Endothelial cell of umbilical vein (primary cell): ENCODE measurements at regions of chr19 and their contacts with region 1.

Region 1: DNA sequence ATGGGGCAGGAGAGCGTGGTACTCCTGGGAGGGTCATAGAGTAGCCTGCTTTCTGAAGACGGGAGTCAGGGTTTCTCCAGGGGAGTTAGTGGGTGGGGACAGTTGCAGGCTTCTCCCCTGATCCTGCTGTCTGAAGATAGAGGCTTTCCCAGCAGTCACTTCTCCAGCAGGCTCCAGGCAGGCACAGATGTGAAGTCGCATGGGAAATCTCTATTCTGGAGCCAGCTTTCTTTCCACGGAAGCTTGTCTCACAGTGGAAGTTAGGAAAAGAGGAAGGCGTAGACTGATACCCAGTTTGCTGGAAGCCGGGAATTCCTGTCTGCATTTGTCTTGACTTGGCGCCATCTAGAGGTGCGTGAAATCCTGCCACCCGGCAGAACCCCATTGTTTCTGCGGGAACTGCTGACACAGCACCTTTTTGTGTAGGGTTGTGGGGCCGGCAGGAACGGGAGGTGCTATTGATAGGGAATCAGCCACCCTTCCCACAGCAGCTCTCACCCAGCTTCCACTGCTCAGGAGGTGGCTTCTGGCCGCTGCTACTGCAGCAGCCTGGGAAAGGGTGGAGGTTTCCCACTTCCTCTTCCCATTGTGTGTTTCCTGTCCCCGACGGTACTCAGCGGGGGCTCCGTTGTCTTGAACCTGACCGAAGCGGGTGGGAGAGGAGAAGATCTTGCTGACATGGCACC is 28.5 kb upstream of the NPAS1 start:
- DNase-seq: peak; percentile 83
- H3K4me3 ChIP-seq: no peak overlapping the region
- H3K27ac ChIP-seq: no peak overlapping the region
- H3K4me1 ChIP-seq: peaks cover 11% of the 10 kb centered on the region
- H3K27me3 ChIP-seq: no peaks in the 10 kb centered on the region
- CTCF ChIP-seq: peak; percentile 87 to 95
- POLR2A ChIP-seq: no peak

Region 2: DNA sequence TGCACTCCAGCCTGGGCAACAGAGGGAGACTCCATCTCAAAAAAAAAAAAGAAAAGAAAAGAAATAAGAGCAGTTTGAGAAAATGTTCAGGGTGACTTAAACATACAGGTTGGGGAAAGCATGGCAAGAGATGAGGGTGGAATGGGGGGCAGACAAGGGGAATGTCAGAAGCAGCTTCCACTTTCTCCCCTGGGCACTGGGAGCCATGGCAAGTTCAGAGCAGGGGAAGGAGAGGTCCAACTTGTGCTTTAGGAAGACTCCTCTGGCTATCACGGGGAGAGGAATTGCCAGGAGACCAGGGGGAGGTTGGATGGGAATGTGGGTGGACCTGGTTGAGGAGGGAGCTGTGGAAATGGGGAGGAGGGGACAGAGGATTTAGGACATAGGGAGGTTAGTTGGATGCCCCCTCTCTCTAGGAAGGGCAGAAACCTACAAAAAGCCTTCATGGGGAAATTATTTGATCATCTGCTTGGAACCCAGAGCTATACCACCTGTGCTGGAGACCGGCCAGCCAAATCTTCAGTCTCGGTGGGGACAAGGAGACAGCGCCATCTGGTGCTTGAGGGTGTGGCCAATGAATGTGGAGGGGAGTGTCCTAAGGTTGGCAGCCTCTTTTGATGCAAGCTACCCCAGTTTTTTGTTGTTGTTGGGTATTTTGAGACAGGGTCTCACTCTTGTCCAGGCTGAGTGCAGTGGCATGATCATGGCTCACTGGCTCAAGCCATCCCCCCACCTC is 237.5 kb before region 1 on chr19:
- CTCF ChIA-PET with region 1: interaction called, 7 read pairs
- POLR2A ChIA-PET with region 1: interaction called, 3 read pairs
- dilution Hi-C with region 1: no loop called
- intact Hi-C with region 1: loop called (anchors 1 kb)
- DNase-seq: peak; percentile 41
- H3K4me3 ChIP-seq: no peak overlapping the region
- H3K27ac ChIP-seq: no peak overlapping the region
- H3K4me1 ChIP-seq: peaks cover 27% of the 10 kb centered on the region
- H3K27me3 ChIP-seq: no peaks in the 10 kb centered on the region
- CTCF ChIP-seq: peak; percentile 47 to 53
- POLR2A ChIP-seq: no peak

Region 3: GRCh38 chr19:46850228-46851203 is 140.6 kb before region 1 on chr19 and contains the start of gene AP2S1:
- CTCF ChIA-PET with region 1: interaction called, 126 read pairs
- POLR2A ChIA-PET with region 1: no interaction called
- dilution Hi-C with region 1: no loop called
- intact Hi-C with region 1: no loop called
- DNase-seq: peak; percentile 99
- H3K4me3 ChIP-seq: peak within 1 kb of the TSS; percentile 71 to 97 (median 89)
- H3K27ac ChIP-seq: peak within 1 kb of the TSS; percentile 73
- H3K4me1 ChIP-seq: peaks cover 10% of the 10 kb centered on the region
- H3K27me3 ChIP-seq: no peaks in the 10 kb centered on the region
- CTCF ChIP-seq: no peak
- POLR2A ChIP-seq: peak; percentile 70
- total RNA-seq, gene AP2S1: 279 and 313 TPM in 2 replicates

Region 4: DNA sequence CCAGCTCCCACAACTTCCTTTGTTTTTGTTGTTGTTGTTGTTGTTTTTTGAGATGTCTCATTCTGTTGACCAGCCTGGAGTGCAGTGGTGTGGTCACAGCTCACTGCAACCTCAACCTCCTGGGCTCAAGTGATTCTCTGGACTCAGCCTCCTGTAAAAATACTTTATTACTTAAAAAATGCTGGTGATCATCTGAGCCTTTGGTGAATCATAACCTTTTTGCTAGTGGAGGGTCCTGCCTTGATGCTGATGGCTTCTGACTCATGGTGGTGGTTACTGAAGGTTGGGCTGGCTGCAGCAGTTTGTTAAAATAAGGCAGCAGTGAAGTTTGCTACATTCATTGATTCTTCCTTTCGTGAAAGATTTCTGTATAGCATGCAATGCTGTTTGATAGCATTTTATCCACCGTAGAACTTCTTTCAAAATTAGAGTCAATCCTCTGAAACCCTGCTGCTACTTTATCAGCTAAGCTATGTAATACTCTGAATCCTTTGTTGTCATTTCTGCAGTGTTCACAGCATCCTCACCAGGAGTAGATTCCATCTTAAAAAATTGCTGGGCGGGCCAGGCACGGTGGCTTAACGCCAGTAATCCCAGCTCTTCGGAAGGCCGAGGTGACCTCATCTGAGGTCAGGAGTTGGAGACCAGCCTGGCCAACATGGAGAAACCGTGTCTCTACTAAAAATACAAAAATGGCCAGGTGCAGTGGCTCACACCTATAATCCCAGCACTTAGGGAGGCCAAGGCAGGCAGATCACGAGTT is 112.3 kb before region 1 on chr19:
- CTCF ChIA-PET with region 1: interaction called, 10 read pairs
- POLR2A ChIA-PET with region 1: no interaction called
- dilution Hi-C with region 1: no loop called
- intact Hi-C with region 1: no loop called
- DNase-seq: peak; percentile 26
- H3K4me3 ChIP-seq: no peak overlapping the region
- H3K27ac ChIP-seq: peak overlapping the region; percentile 5
- H3K4me1 ChIP-seq: peaks cover 15% of the 10 kb centered on the region
- H3K27me3 ChIP-seq: no peaks in the 10 kb centered on the region
- CTCF ChIP-seq: no peak
- POLR2A ChIP-seq: no peak

Region 5: GRCh38 chr19:46924874-46925547 is 66.1 kb before region 1 on chr19:
- CTCF ChIA-PET with region 1: interaction called, 40 read pairs
- POLR2A ChIA-PET with region 1: no interaction called
- dilution Hi-C with region 1: no loop called
- intact Hi-C with region 1: loop called (anchors 2 kb)
- DNase-seq: peak; percentile 74
- H3K4me3 ChIP-seq: no peak overlapping the region
- H3K27ac ChIP-seq: peak overlapping the region; percentile 73
- H3K4me1 ChIP-seq: peaks cover 25% of the 10 kb centered on the region
- H3K27me3 ChIP-seq: no peaks in the 10 kb centered on the region
- CTCF ChIP-seq: no peak
- POLR2A ChIP-seq: peak; percentile 20

Region 6: DNA sequence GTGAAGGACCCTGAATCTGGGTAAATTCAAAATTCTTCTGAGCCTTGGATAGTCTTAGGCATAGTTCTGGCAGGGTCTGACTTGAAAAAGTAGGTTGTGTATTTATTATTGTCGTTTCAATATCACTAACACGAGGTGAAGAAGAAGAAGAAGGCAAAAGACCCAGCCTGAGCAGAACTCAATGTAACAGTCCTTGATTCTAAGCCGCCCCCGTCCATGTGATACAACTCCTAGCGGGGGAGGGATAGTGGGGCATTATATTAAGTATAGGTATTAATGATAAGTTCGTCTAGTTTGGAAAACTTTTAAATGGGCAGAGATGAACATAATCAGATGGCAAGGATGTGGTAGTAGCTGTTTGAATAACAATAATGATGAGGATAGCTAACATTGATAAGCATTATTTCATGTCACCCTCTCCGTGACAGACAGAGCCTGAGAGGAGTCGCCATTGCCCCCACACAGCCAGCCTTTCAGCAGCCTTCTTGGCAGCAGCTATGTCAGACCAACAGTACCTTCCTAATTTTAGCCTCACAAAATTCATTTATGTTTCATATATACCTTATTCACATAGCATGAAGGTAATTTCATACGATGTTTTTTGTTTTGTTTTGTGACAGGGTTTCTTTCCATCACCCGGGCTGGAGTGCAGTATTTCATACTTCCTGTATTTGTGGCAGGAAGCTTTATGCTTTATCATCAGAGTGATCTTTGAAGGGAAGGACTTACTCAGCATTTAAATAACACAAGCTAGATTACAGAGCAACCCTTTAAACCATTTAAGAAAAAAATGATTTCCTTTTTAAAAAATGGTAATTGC is 35.9 kb before region 1 on chr19:
- CTCF ChIA-PET with region 1: interaction called, 13 read pairs
- POLR2A ChIA-PET with region 1: no interaction called
- dilution Hi-C with region 1: no loop called
- intact Hi-C with region 1: no loop called
- DNase-seq: peak; percentile 75
- H3K4me3 ChIP-seq: peak overlapping the region in 2 of 3 experiments; percentile 8 to 54
- H3K27ac ChIP-seq: peak overlapping the region; percentile 73
- H3K4me1 ChIP-seq: peaks cover 20% of the 10 kb centered on the region
- H3K27me3 ChIP-seq: no peaks in the 10 kb centered on the region
- CTCF ChIP-seq: no peak
- POLR2A ChIP-seq: no peak

Region 7: DNA sequence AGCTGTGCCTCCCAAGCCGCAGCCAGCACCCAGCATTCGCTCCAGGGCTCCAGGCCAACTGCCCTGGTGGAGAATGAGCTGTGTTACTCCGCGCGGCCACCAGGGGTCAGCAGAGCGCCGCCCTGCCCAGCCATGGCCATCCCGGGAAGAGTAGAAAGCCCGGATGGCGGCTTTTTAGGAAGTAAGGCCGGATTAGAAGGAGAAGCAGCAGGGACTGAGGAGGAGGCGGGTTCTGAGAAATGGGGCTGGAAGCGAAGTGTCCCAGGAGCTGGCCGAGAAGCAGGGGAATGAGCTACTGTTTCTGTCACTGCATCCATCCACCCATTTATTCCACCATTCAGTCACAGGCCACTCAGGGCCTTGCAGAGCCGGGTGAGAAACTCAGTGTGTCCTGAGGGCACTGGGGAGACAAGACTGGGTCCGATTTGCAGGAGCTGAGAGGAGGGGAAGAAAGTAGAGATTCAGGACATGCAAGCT is 21.9 kb after region 1 on chr19:
- CTCF ChIA-PET with region 1: interaction called, 11 read pairs
- POLR2A ChIA-PET with region 1: no interaction called
- dilution Hi-C with region 1: no loop called
- intact Hi-C with region 1: no loop called
- DNase-seq: peak; percentile 66
- H3K4me3 ChIP-seq: no peak overlapping the region
- H3K27ac ChIP-seq: no peak overlapping the region
- H3K4me1 ChIP-seq: no peaks in the 10 kb centered on the region
- H3K27me3 ChIP-seq: no peaks in the 10 kb centered on the region
- CTCF ChIP-seq: peak; percentile 98 to 99
- POLR2A ChIP-seq: no peak